ENCODE measurements at regions of chr1 and their contacts with region 1.

Region 1: DNA sequence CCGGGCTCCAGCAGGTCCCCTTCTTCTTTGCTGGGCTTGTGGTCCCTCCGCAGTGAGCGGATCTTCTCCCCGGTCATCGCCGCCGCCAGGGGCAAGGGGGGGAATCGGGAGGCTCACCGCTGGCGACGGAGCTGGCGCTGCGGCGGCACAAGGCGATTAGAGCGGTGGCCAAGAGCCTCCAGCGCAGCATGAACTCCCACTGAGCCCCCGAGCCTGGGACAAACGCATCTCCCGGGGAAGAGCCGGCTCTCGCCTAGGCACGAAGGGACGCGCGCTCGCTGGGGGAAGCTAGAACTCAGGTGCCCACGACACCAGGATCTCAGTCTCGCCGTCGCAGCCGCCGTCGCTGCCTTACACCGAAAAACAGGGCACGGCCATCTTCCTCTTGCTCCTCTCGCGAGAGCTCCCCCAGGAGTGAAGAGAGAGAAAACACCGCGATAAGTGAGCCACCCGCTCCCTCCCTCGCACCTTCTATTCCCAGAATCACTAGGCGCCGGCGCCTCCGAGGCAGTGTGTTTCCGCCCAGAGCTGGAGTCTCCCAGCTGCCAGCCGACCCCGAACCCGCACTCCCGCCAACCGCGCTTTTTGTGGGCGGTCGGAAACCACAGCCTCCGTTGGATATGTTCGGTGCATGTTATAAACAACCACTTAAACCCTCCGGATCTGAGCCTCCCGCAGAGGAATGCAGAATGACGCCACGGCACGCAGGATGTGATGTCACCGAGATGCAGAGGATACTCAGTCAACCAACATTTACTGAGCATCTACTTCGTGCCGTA is at the start of gene ANKRD13C:
- DNase-seq: peak; percentile 86 to 98
- H3K4me3 ChIP-seq: peak within 1 kb of the TSS; percentile 82 to 92
- H3K27ac ChIP-seq: peak within 1 kb of the TSS; percentile 91 to 96
- H3K4me1 ChIP-seq: peaks cover 3 to 34% of the 10 kb centered on the region in 2 donors
- H3K27me3 ChIP-seq: no peaks in the 10 kb centered on the region
- CTCF ChIP-seq: no peak
- total RNA-seq, gene ANKRD13C: 30.2 TPM

Region 2: DNA sequence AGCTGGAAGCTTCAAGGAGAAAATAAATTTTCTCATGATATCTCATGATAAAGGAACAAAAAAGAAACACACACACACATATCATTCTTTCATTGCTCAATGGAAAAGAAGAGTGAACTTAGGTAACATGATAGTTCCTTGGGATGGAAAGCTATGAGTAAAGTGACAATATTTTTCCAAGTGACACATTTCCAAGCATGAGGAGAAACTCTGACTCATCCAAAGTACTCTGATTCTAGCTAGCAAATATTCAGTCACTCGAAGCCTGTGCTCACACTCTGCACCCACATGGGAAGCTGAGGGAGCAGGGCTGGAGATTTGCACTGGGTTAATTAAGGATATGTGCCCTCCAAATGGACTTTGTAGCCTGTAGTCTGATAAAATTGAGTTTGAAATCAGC is 371.5 kb before region 1 on chr1:
- intact Hi-C with region 1: no loop called
- DNase-seq: no peak
- H3K4me3 ChIP-seq: no peak overlapping the region
- H3K27ac ChIP-seq: no peak overlapping the region
- H3K4me1 ChIP-seq: no peaks in the 10 kb centered on the region
- H3K27me3 ChIP-seq: no peaks in the 10 kb centered on the region
- CTCF ChIP-seq: no peak

Region 3: GRCh38 chr1:70205434-70206118 is 148.9 kb before region 1 on chr1 and contains the start of gene LRRC40:
- intact Hi-C with region 1: loop called (anchors 5 kb)
- DNase-seq: peak; percentile 88 to 97
- H3K4me3 ChIP-seq: peak within 1 kb of the TSS; percentile 72 to 82
- H3K27ac ChIP-seq: peak within 1 kb of the TSS; percentile 85 to 94
- H3K4me1 ChIP-seq: peaks cover 0 to 28% of the 10 kb centered on the region in 2 donors
- H3K27me3 ChIP-seq: no peaks in the 10 kb centered on the region
- CTCF ChIP-seq: no peak
- total RNA-seq, gene LRRC40: 10.6 TPM

Region 4: GRCh38 chr1:70397014-70397413 is 42.5 kb after region 1 on chr1:
- intact Hi-C with region 1: no loop called
- DNase-seq: no peak
- H3K4me3 ChIP-seq: no peak overlapping the region
- H3K27ac ChIP-seq: no peak overlapping the region
- H3K4me1 ChIP-seq: no peaks in the 10 kb centered on the region
- H3K27me3 ChIP-seq: no peaks in the 10 kb centered on the region
- CTCF ChIP-seq: no peak

Region 5: GRCh38 chr1:70410604-70411359 is 56.3 kb after region 1 on chr1 and contains the start of gene CTH:
- intact Hi-C with region 1: loop called (anchors 1 kb)
- DNase-seq: peak; percentile 91 to 98
- H3K4me3 ChIP-seq: peak within 1 kb of the TSS; percentile 73 to 91
- H3K27ac ChIP-seq: peak within 1 kb of the TSS; percentile 93 to 96
- H3K4me1 ChIP-seq: peaks cover 0 to 7% of the 10 kb centered on the region in 2 donors
- H3K27me3 ChIP-seq: no peaks in the 10 kb centered on the region
- CTCF ChIP-seq: no peak
- total RNA-seq, gene CTH: 4.3 TPM

Region 6: DNA sequence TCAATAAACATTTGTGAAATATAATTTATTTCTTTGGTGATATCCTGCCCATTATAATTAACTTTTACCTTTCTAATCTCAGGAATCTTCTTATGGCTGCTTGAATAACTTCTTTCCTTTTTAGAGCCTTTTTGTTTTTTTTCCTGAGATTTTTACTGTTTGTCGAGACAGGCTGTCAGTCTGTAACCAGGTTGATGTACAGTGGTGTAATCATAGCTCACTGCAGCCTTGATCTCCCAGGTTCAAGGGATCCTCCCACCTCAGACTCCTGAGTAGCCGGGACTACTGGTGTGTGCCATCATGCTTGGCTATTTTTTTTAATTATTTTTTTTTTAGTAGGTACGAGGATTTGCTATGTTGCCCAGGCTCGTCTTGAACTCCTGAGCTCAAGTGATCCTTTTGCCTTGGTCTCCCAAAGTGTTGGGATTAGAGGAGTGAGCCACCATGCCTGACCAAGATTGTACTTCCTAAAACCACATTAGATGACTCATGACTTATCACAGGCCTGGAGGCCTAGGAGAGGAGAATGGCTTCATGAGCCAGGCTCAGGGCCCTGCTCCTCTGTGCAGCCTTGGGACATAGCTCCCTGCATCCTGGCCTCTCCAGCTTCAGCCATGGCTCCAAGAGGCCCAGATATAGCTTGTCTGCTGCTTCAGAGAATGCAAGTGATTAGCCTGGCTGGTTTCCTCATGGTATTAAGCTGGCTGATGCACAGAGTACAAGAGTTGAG is 105.1 kb after region 1 on chr1:
- intact Hi-C with region 1: no loop called
- DNase-seq: no peak
- H3K4me3 ChIP-seq: no peak overlapping the region
- H3K27ac ChIP-seq: no peak overlapping the region
- H3K4me1 ChIP-seq: no peaks in the 10 kb centered on the region
- H3K27me3 ChIP-seq: no peaks in the 10 kb centered on the region
- CTCF ChIP-seq: no peak

Measured in ascending aorta (tissue), 2 donors.